ENCODE measurements at regions of chr1 and their contacts with region 1.

Region 1: DNA sequence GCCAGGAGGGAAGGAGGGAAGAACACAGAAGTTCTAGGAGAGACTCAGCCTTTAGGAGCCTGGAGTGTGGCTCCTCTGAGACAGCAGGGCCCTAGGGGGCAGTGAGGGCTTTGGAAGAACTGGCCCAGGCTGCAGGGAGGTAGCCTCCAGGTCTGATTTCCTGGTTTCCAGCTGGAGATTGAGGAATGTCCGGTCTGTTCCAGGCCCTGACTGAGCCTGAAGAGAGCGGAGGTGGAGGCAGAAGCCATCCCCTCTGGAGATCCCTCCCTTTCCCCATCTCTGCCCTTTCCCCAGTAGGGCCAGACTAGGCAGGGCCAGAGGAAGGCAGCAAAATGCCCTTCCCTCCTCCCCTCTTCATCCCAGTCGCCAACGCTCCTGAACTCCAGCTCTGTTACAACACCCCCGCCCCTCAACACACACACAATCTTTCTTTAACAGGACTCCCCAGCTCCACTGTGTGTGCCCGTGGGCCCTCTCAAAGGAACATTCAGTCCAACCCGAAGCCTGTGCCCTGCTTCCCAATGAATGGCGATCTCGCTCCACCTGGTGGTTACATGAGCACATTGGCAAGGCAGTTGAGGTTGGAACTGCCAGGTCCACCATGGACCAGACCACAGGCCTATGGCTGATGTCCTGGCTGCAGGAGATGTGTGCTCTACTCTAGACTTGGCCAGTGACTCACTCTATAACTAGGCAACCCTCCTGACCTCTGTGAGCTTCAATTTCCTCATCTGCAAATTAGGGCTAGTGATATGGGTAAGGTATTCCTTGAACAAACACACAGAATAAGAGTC is 32.0 kb downstream of the MAP7D1 start:
- DNase-seq: peak; percentile 88
- ATAC-seq: peak; percentile 94

Region 2: GRCh38 chr1:36068883-36069282 is 119.1 kb before region 1 on chr1:
- intact Hi-C with region 1: no loop called
- DNase-seq: no peak
- ATAC-seq: no peak

Region 3: GRCh38 chr1:36155408-36156328 is 32.3 kb before region 1 on chr1 and contains the start of gene MAP7D1:
- intact Hi-C with region 1: loop called (anchors 2 kb)
- DNase-seq: peak; percentile 94
- ATAC-seq: peak; percentile 68
- total RNA-seq, gene MAP7D1: 390 TPM

Measured in Right ventricle myocardium superior (tissue), 1 donor.